CD4-positive, alpha-beta memory T cell (primary cell): ENCODE measurements at regions of chr1 and their contacts with region 1.

Region 1: GRCh38 chr1:108075055-108075454 is 110.1 kb upstream of the VAV3 start:
- DNase-seq: no peak
- H3K4me3 ChIP-seq: no peak overlapping the region
- H3K4me3 Mint-ChIP-seq: no peak overlapping the region
- H3K27ac ChIP-seq: no peak overlapping the region
- H3K27ac Mint-ChIP-seq: no peak overlapping the region
- H3K4me1 ChIP-seq: peaks cover 35% of the 10 kb centered on the region
- H3K4me1 Mint-ChIP-seq: peaks cover 21 to 32% (median 27%) of the 10 kb centered on the region in 4 donors
- H3K27me3 ChIP-seq: no peaks in the 10 kb centered on the region
- H3K27me3 Mint-ChIP-seq: no peaks in the 10 kb centered on the region

Region 2: GRCh38 chr1:108199781-108200570 is 124.9 kb after region 1 on chr1 and contains the start of gene SLC25A24:
- CTCF ChIA-PET with region 1: no interaction called
- POLR2A ChIA-PET with region 1: interaction called, 3 read pairs
- intact Hi-C with region 1: loop called (anchors 5 kb)
- DNase-seq: peak; percentile 72 to 82 (median 78)
- H3K4me3 ChIP-seq: peak within 1 kb of the TSS; percentile 58 to 80
- H3K4me3 Mint-ChIP-seq: peak within 1 kb of the TSS; percentile 87 to 94 (median 92)
- H3K27ac ChIP-seq: peak within 1 kb of the TSS; percentile 64
- H3K27ac Mint-ChIP-seq: peak within 1 kb of the TSS; percentile 85 to 93 (median 90)
- H3K4me1 ChIP-seq: peaks cover 23% of the 10 kb centered on the region
- H3K4me1 Mint-ChIP-seq: peaks cover 31 to 45% (median 37%) of the 10 kb centered on the region in 4 donors
- H3K27me3 ChIP-seq: no peaks in the 10 kb centered on the region
- H3K27me3 Mint-ChIP-seq: no peaks in the 10 kb centered on the region
- total RNA-seq, gene SLC25A24: 18.6 to 19.1 TPM